Ascending aorta (tissue), 2 donors: ENCODE measurements at regions of chr2 and their contacts with region 1.

Region 1: DNA sequence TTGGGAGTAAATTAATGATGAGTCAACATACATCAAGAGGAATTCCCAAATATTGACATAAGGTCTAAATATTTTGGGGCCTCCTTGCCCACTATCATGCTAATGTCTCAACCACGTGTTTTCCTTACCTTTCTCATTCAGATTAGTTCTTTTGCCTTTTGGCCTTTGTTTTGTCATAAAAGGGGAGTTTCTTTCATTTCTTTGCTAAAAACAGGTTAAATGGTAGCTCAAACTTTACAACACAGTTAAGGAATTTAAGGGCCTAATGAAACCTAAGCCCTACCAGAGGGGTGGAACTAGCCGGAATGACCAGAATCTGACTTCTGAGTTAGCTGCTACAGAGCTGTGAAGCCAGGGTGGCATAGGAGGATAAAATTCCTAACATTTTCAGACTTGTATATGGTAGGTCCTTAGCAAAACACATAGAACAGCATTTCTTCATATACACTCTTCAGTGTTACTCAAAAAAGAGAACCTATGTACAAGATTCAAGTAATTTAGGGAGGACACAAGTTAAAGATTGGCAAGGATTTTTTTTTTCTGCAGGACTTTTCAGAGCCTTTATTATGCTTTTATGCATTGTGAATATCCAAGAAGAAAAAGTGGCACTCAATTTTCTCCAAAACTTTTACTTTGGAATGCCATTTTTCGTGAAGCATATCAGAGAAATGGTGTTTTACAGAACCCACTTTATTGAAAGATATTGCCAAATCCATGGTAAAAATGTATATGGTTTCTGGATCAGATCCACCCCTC is 633.1 kb downstream of the ARHGAP15 start:
- DNase-seq: no peak
- H3K4me3 ChIP-seq: no peak overlapping the region
- H3K27ac ChIP-seq: no peak overlapping the region
- H3K4me1 ChIP-seq: no peaks in the 10 kb centered on the region
- H3K27me3 ChIP-seq: no peaks in the 10 kb centered on the region
- CTCF ChIP-seq: no peak

Region 2: GRCh38 chr2:143553261-143553660 is 209.1 kb before region 1 on chr2:
- intact Hi-C with region 1: no loop called
- DNase-seq: no peak
- H3K4me3 ChIP-seq: no peak overlapping the region
- H3K27ac ChIP-seq: no peak overlapping the region
- H3K4me1 ChIP-seq: no peaks in the 10 kb centered on the region
- H3K27me3 ChIP-seq: no peaks in the 10 kb centered on the region
- CTCF ChIP-seq: no peak

Region 3: DNA sequence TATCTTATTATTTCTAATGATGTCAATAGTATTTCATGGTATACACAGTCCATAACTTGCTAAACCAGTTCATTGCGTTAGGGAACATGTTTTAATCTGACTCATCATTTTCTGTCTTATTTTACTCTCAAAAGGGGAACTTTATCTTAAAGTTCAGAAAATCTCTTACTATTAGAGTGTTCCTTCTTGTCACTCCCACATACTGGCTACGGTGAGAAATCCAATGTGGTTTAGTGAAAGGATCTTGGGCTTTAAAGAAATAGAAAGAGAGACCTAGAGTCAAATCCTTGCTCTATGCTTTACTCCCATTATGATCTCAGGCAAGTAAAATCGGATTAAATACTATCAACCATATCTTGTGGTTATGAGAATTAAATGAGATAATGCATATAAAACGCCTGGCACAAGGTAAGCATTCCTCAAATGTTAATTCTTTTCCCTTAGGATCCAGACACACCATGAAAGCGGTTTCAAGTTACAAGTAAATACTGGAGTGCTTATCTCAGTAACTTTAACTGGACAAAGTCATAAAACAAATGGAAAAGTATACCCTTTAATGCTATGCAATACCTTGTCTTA is 57.2 kb before region 1 on chr2:
- intact Hi-C with region 1: no loop called
- DNase-seq: no peak
- H3K4me3 ChIP-seq: no peak overlapping the region
- H3K27ac ChIP-seq: no peak overlapping the region
- H3K4me1 ChIP-seq: peaks cover 5 to 24% of the 10 kb centered on the region in 2 donors
- H3K27me3 ChIP-seq: no peaks in the 10 kb centered on the region
- CTCF ChIP-seq: no peak

Region 4: GRCh38 chr2:145289946-145290345 is 1527.6 kb after region 1 on chr2:
- intact Hi-C with region 1: loop called (anchors 5 kb)
- DNase-seq: no peak
- H3K4me3 ChIP-seq: no peak overlapping the region
- H3K27ac ChIP-seq: no peak overlapping the region
- H3K4me1 ChIP-seq: no peaks in the 10 kb centered on the region
- H3K27me3 ChIP-seq: no peaks in the 10 kb centered on the region
- CTCF ChIP-seq: no peak